CD4-positive, alpha-beta T cell (primary cell): ENCODE measurements at regions of chr3 and their contacts with region 1.

Region 1: GRCh38 chr3:177603148-177603603 is 405.9 kb upstream of the TBL1XR1 start:
- DNase-seq: no peak
- ATAC-seq: no peak
- H3K4me3 ChIP-seq: no peak overlapping the region
- H3K4me3 Mint-ChIP-seq: no peak overlapping the region
- H3K27ac ChIP-seq: no peak overlapping the region
- H3K27ac Mint-ChIP-seq: no peak overlapping the region
- H3K4me1 ChIP-seq: peaks cover 23% of the 10 kb centered on the region
- H3K4me1 Mint-ChIP-seq: peaks cover 66% of the 10 kb centered on the region
- H3K27me3 ChIP-seq: no peaks in the 10 kb centered on the region
- H3K27me3 Mint-ChIP-seq: no peaks in the 10 kb centered on the region
- CTCF ChIP-seq: no peak

Region 2: DNA sequence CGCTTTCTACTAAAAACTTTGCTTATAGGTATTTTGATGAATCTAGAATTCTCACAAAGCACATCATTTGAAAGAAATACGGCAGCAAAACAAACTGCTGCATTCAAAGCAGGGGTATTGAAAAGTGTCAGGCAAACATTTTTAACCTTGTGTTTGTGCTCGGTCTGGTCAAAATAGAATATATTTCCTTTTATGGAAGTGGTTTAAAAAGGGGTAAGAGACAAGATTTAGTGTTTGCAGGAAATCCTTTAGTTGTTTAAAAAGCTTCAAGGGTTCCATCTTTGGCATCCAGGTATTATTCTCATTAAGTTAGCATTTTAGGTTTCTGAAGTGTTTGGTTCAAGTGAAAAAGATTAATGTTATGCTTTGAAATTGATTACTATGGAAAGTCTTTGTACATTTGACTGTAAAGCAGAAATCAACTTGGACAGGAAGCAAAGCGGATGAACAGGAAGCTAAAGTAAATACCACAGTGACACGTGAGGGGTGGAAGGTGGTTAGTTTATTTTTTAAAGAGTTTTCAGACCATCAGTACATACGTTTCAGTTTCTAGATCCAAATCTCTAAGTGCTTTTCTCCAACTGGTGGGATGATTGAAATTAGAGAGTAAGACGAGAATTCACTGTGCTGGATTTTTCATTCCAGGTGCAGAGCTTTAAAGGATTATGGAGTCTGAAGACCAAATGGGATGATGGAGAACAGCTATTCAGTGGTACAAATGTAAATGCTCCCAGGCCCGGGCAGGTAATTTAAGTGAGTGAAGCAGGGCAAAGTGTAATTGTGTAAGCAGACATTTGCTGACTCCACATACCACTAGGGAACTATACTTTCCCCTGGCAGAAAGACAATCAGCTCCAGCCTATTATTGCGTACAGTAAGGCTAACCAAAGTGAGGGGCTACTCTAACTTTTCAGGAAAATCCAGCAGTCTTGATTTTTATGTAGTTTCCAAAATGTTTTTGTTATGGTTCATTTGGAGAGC is 64.1 kb before region 1 on chr3:
- CTCF ChIA-PET with region 1: no interaction called
- POLR2A ChIA-PET with region 1: interaction called, 11 read pairs
- intact Hi-C with region 1: loop called (anchors 5 to 10 kb)
- DNase-seq: peak in 4 of 14 experiments; percentile 20 to 79 (median 55)
- ATAC-seq: peak; percentile 59
- H3K4me3 ChIP-seq: peak overlapping the region; percentile 19
- H3K4me3 Mint-ChIP-seq: peak overlapping the region; percentile 74
- H3K27ac ChIP-seq: peak overlapping the region; percentile 19 to 31
- H3K27ac Mint-ChIP-seq: peak overlapping the region; percentile 83
- H3K4me1 ChIP-seq: peaks cover 27% of the 10 kb centered on the region
- H3K4me1 Mint-ChIP-seq: peaks cover 65% of the 10 kb centered on the region
- H3K27me3 ChIP-seq: no peaks in the 10 kb centered on the region
- H3K27me3 Mint-ChIP-seq: no peaks in the 10 kb centered on the region
- CTCF ChIP-seq: no peak

Region 3: GRCh38 chr3:177579419-177579818 is 23.8 kb before region 1 on chr3:
- CTCF ChIA-PET with region 1: no interaction called
- POLR2A ChIA-PET with region 1: no interaction called
- intact Hi-C with region 1: no loop called
- DNase-seq: no peak
- ATAC-seq: no peak
- H3K4me3 ChIP-seq: no peak overlapping the region
- H3K4me3 Mint-ChIP-seq: no peak overlapping the region
- H3K27ac ChIP-seq: no peak overlapping the region
- H3K27ac Mint-ChIP-seq: no peak overlapping the region
- H3K4me1 ChIP-seq: no peaks in the 10 kb centered on the region
- H3K4me1 Mint-ChIP-seq: no peaks in the 10 kb centered on the region
- H3K27me3 ChIP-seq: no peaks in the 10 kb centered on the region
- H3K27me3 Mint-ChIP-seq: no peaks in the 10 kb centered on the region
- CTCF ChIP-seq: no peak

Region 4: DNA sequence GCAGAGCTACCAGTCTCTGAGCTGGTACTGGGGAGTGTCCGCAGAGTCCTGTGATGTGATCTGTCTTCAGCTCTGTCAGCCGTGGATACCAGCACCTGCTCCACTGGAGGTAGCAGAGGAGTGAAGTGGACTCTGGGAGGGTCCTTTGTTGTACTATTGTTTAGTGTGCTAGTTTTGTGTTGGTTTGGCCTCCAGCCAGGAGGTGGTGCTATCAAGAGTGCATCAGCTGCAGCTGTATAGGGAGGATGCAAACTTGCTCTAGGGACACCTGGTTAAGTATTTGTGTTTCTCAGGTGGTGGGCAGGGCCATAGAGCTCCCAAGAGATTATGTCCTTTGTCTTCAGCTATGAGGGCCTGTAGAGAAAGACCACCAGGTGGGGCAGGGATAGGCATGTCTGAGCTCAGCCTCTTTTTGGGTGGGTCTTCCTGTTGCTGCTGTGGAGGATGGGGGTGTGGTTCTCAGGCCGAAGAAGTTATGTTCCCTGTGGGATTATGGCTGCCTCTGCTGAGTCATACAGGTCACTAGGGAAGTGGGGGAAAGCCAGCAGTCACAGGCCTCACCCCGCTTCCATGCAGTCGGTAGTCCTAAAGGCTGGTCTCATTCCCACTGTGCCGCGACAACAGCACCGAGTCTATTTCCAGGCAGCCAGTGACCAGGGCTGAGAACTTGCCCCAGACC is 37.3 kb after region 1 on chr3:
- CTCF ChIA-PET with region 1: no interaction called
- POLR2A ChIA-PET with region 1: interaction called, 8 read pairs
- intact Hi-C with region 1: loop called (anchors 5 to 10 kb)
- DNase-seq: no peak
- ATAC-seq: no peak
- H3K4me3 ChIP-seq: no peak overlapping the region
- H3K4me3 Mint-ChIP-seq: no peak overlapping the region
- H3K27ac ChIP-seq: no peak overlapping the region
- H3K27ac Mint-ChIP-seq: no peak overlapping the region
- H3K4me1 ChIP-seq: peaks cover 37% of the 10 kb centered on the region
- H3K4me1 Mint-ChIP-seq: peaks cover 64% of the 10 kb centered on the region
- H3K27me3 ChIP-seq: no peaks in the 10 kb centered on the region
- H3K27me3 Mint-ChIP-seq: no peaks in the 10 kb centered on the region
- CTCF ChIP-seq: no peak

Region 5: DNA sequence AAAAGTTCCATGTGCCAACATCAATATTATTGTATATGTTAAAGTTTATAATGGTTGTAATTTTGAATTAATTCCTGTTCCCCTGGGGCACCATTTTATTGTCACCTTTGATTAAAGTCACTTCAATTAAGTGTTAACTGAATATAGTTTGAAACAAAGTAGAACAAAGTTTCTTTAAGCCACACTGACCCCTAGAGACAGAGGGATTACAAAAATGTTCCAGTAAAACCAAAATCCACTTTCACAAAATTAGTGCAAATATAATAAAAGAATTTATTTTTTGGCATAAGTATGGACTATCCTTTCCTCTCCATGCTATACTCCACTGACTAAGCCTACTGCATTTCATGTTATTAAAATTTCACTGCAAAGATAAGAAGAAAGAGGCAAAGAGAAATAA is 1344.6 kb after region 1 on chr3:
- CTCF ChIA-PET with region 1: no interaction called
- POLR2A ChIA-PET with region 1: no interaction called
- intact Hi-C with region 1: no loop called
- DNase-seq: no peak
- ATAC-seq: no peak
- H3K4me3 ChIP-seq: no peak overlapping the region
- H3K4me3 Mint-ChIP-seq: no peak overlapping the region
- H3K27ac ChIP-seq: no peak overlapping the region
- H3K27ac Mint-ChIP-seq: no peak overlapping the region
- H3K4me1 ChIP-seq: no peaks in the 10 kb centered on the region
- H3K4me1 Mint-ChIP-seq: no peaks in the 10 kb centered on the region
- H3K27me3 ChIP-seq: no peaks in the 10 kb centered on the region
- H3K27me3 Mint-ChIP-seq: no peaks in the 10 kb centered on the region
- CTCF ChIP-seq: no peak